ENCODE measurements at regions of chr20 and their contacts with region 1.

Region 1: GRCh38 chr20:37564388-37565133 is 36.9 kb upstream of the BLCAP start:
- H3K4me3 ChIP-seq: no peak overlapping the region
- H3K27ac ChIP-seq: no peak overlapping the region
- H3K4me1 ChIP-seq: peaks cover 5% of the 10 kb centered on the region; the same call in 1 of the 2 replicates
- CTCF ChIP-seq: peak; percentile 92

Region 2: GRCh38 chr20:37053230-37053950 is 511.2 kb before region 1 on chr20:
- CTCF ChIA-PET with region 1: no interaction called
- POLR2A ChIA-PET with region 1: no interaction called
- H3K4me3 ChIP-seq: no peak overlapping the region
- H3K27ac ChIP-seq: no peak overlapping the region
- H3K4me1 ChIP-seq: no peaks in the 10 kb centered on the region
- CTCF ChIP-seq: no peak

Region 3: DNA sequence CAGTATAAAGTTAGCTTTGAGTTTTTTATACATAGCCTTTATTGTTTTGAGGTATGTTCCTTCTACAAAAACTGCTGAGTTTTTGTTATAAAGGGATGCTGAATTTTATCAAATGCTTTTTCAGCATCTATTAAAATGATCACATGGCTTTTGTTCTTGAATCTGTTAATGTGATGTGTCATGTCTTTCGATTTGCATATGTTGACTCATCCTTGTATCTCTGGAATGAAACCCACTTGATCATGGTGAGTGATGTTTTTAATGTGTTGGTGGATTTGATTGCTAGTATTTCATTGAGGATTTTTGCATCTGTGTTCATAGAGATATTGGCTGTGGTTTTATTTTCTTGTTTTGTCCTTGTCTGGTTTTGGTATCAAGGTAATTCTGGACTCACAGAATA is 12.1 kb before region 1 on chr20:
- CTCF ChIA-PET with region 1: interaction called, 22 read pairs
- POLR2A ChIA-PET with region 1: no interaction called
- H3K4me3 ChIP-seq: no peak overlapping the region
- H3K27ac ChIP-seq: no peak overlapping the region
- H3K4me1 ChIP-seq: no peaks in the 10 kb centered on the region
- CTCF ChIP-seq: no peak

Region 4: GRCh38 chr20:37575884-37576283 is 11.3 kb after region 1 on chr20:
- CTCF ChIA-PET with region 1: interaction called, 10 read pairs
- POLR2A ChIA-PET with region 1: no interaction called
- H3K4me3 ChIP-seq: no peak overlapping the region
- H3K27ac ChIP-seq: no peak overlapping the region
- H3K4me1 ChIP-seq: no peaks in the 10 kb centered on the region
- CTCF ChIP-seq: no peak

Region 5: GRCh38 chr20:37984018-37984785 is 419.6 kb after region 1 on chr20:
- CTCF ChIA-PET with region 1: interaction called, 11 read pairs
- POLR2A ChIA-PET with region 1: no interaction called
- H3K4me3 ChIP-seq: no peak overlapping the region
- H3K27ac ChIP-seq: no peak overlapping the region
- H3K4me1 ChIP-seq: no peaks in the 10 kb centered on the region
- CTCF ChIP-seq: no peak

Region 6: DNA sequence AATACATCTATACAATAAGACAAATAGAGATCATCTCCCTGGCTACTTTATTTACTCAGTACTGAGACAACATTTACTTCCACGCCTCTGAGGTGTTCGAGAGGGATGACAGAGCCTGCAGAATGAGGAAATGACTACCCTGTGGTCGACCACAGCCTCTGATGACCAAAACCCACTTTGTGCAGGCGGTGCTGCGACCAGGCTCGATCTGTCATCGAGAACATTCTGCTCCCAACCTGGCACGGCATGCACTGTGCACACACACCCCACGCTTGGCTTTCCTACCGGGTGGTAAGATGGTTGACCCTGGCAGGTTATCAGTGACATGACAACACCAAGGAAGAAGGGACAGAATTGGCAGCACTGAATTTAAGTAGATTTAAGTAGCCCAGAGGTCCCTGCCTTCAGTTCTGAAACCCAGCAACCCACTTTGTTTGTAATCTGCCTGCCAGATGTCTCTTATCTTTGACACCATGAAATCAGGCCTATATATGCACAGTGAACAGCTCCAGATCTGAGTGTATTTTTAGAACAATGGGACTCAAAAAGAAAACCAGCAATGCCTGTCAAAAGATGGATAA is 426.1 kb after region 1 on chr20:
- CTCF ChIA-PET with region 1: interaction called, 43 read pairs
- POLR2A ChIA-PET with region 1: no interaction called
- H3K4me3 ChIP-seq: no peak overlapping the region
- H3K27ac ChIP-seq: no peak overlapping the region
- H3K4me1 ChIP-seq: no peaks in the 10 kb centered on the region
- CTCF ChIP-seq: no peak

Region 7: GRCh38 chr20:38050686-38051085 is 486.1 kb after region 1 on chr20:
- CTCF ChIA-PET with region 1: interaction called, 14 read pairs
- POLR2A ChIA-PET with region 1: no interaction called
- H3K4me3 ChIP-seq: no peak overlapping the region
- H3K27ac ChIP-seq: no peak overlapping the region
- H3K4me1 ChIP-seq: peaks cover 3% of the 10 kb centered on the region; the same call in 1 of the 2 replicates
- CTCF ChIP-seq: no peak

Measured in HEK293 (cell line).